PC-3 (cell line): ENCODE measurements at regions of chrX and their contacts with region 1.

Region 1: GRCh38 chrX:81121513-81122382 is 80.0 kb downstream of the HMGN5 start:
- DNase-seq: peak; percentile 94
- ATAC-seq: peak; percentile 96
- H3K4me3 ChIP-seq: peak overlapping the region; percentile 94
- H3K27ac ChIP-seq: no peak overlapping the region
- H3K4me1 ChIP-seq: no peaks in the 10 kb centered on the region
- H3K27me3 ChIP-seq: peaks cover 12% of the 10 kb centered on the region; the same call in 1 of the 2 replicates
- CTCF ChIP-seq: no peak

Region 2: DNA sequence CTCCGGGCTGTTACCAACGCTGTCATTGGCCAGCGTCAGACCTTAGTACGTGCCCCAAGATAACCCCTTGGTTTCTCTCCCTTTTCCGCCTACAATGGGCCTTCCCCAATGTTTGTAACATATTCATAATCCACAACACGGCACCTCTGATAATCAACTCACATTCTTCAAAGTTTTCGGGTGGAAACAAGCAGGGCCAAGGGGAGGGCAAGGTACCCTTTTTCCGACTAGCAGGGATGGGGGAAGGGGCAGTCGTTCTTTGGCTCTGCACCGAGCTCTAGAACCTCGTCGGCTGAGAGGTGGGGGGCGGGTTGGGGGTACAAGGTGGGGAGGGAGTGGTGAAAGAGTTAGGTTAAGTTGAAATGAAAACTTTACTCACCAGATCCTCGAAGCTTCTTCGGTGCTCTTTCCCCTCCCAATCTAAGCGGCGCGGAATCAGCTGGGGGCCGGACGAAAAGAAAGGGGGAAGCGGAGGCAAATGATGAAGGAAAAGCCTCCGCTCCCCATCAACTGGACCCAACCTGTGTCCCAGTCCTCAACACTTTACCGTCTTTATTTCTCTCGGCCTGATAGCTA is 313.5 kb before region 1 on chrX:
- CTCF ChIA-PET with region 1: no interaction called
- POLR2A ChIA-PET with region 1: no interaction called
- intact Hi-C with region 1: loop called (anchors 2 kb)
- DNase-seq: peak; percentile 80
- ATAC-seq: peak; percentile 51
- H3K4me3 ChIP-seq: peak overlapping the region; percentile 97
- H3K27ac ChIP-seq: no peak overlapping the region
- H3K4me1 ChIP-seq: peaks cover 13% of the 10 kb centered on the region
- H3K27me3 ChIP-seq: no peaks in the 10 kb centered on the region
- CTCF ChIP-seq: no peak

Region 3: GRCh38 chrX:80876877-80877276 is 244.9 kb before region 1 on chrX:
- CTCF ChIA-PET with region 1: interaction called, 4 read pairs
- POLR2A ChIA-PET with region 1: interaction called, 4 read pairs
- intact Hi-C with region 1: loop called (anchors 1 kb)
- DNase-seq: peak; percentile 56
- ATAC-seq: no peak
- H3K4me3 ChIP-seq: no peak overlapping the region
- H3K27ac ChIP-seq: no peak overlapping the region
- H3K4me1 ChIP-seq: peaks cover 12% of the 10 kb centered on the region
- H3K27me3 ChIP-seq: no peaks in the 10 kb centered on the region
- CTCF ChIP-seq: peak; percentile 59

Region 4: GRCh38 chrX:81174286-81174685 is 52.5 kb after region 1 on chrX:
- CTCF ChIA-PET with region 1: no interaction called
- POLR2A ChIA-PET with region 1: no interaction called
- intact Hi-C with region 1: loop called (anchors 5 kb)
- DNase-seq: peak; percentile 71
- ATAC-seq: peak; percentile 79
- H3K4me3 ChIP-seq: no peak overlapping the region
- H3K27ac ChIP-seq: no peak overlapping the region
- H3K4me1 ChIP-seq: no peaks in the 10 kb centered on the region
- H3K27me3 ChIP-seq: no peaks in the 10 kb centered on the region
- CTCF ChIP-seq: peak; percentile 59

Region 5: DNA sequence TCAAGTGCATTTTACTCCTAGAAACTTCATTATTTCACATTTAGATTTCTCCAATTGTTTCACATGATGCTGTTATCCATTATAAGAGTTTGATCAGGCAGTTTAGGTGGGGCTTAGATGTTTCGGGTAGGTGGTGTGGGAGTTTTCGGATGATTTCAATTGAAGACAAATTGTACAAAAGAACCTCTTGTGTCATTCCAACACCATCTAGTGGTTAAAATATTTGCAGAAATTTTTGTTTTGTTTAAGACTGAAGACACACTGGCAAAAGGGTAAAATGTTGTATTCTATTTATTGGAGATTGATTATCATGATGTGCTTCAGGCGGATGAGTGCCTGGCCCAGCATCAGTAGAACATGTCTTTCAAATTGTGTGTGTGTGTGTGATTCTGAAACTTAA is 292.9 kb after region 1 on chrX:
- CTCF ChIA-PET with region 1: no interaction called
- POLR2A ChIA-PET with region 1: no interaction called
- intact Hi-C with region 1: loop called (anchors 2 kb)
- DNase-seq: peak; percentile 38
- ATAC-seq: no peak
- H3K4me3 ChIP-seq: no peak overlapping the region
- H3K27ac ChIP-seq: no peak overlapping the region
- H3K4me1 ChIP-seq: no peaks in the 10 kb centered on the region
- H3K27me3 ChIP-seq: no peaks in the 10 kb centered on the region
- CTCF ChIP-seq: peak; percentile 50